ENCODE measurements at regions of chr1 and their contacts with region 1.

Region 1: GRCh38 chr1:35557292-35558063 is at the starts of genes KIAA0319L and NCDN:
- DNase-seq: peak; percentile 99
- ATAC-seq: peak; percentile 92
- H3K4me3 Mint-ChIP-seq: peak within 1 kb of the TSS; percentile 98
- H3K27ac Mint-ChIP-seq: peak within 1 kb of the TSS; percentile 97
- H3K4me1 Mint-ChIP-seq: peaks cover 45% of the 10 kb centered on the region
- H3K27me3 Mint-ChIP-seq: no peaks in the 10 kb centered on the region
- total RNA-seq, gene KIAA0319L: 26.5 to 28.1 TPM
- total RNA-seq, gene NCDN: 21.1 to 23.4 TPM

Region 2: DNA sequence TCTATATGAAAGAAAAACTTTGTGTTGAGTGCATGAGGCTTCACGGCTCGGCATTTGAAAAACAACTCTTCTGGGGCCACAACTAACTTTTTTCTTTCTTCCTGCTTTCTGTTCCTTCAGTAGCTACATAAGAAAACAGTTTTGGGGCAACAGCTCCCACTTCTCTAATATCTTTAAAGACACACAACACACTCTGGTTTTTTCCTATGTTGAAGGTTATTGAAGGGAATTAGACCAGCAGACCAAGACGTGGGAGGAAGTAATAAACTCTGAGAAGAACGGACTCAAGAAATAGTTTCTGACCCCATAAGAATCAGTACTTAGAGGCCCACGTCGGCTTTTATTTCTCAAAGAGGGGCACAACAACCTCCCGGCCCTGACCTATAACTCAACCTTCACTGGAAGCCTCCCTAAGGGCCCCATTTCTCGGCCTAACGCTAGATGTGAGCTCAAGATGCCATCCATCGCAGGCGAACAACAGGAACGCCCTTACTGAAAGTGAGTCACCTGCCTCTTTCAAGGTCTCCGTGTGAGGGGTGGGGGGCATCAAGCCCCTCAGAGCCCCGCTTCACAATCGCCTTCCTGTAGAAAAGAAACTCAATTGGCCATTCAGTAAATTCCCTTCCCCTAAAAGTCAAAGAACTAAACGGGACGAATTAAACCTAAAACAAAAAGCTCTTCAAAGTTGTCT is 526.6 kb before region 1 on chr1:
- CTCF ChIA-PET with region 1: no interaction called
- POLR2A ChIA-PET with region 1: no interaction called
- intact Hi-C with region 1: loop called in 1 of 2 experiments (anchors 1 kb)
- DNase-seq: peak; percentile 63
- ATAC-seq: peak; percentile 70
- H3K4me3 Mint-ChIP-seq: peak overlapping the region; percentile 92
- H3K27ac Mint-ChIP-seq: peak overlapping the region; percentile 92
- H3K4me1 Mint-ChIP-seq: peaks cover 33% of the 10 kb centered on the region
- H3K27me3 Mint-ChIP-seq: no peaks in the 10 kb centered on the region

Region 3: GRCh38 chr1:35268282-35269200 is 288.9 kb before region 1 on chr1 and contains the start of gene ZMYM4:
- CTCF ChIA-PET with region 1: no interaction called
- POLR2A ChIA-PET with region 1: no interaction called
- intact Hi-C with region 1: loop called in 1 of 2 experiments (anchors 1 kb)
- DNase-seq: peak; percentile 94
- ATAC-seq: peak; percentile 98
- H3K4me3 Mint-ChIP-seq: peak within 1 kb of the TSS; percentile 76
- H3K27ac Mint-ChIP-seq: peak within 1 kb of the TSS; percentile 83
- H3K4me1 Mint-ChIP-seq: peaks cover 30% of the 10 kb centered on the region
- H3K27me3 Mint-ChIP-seq: no peaks in the 10 kb centered on the region
- total RNA-seq, gene ZMYM4: 27.8 to 31.6 TPM

Region 4: DNA sequence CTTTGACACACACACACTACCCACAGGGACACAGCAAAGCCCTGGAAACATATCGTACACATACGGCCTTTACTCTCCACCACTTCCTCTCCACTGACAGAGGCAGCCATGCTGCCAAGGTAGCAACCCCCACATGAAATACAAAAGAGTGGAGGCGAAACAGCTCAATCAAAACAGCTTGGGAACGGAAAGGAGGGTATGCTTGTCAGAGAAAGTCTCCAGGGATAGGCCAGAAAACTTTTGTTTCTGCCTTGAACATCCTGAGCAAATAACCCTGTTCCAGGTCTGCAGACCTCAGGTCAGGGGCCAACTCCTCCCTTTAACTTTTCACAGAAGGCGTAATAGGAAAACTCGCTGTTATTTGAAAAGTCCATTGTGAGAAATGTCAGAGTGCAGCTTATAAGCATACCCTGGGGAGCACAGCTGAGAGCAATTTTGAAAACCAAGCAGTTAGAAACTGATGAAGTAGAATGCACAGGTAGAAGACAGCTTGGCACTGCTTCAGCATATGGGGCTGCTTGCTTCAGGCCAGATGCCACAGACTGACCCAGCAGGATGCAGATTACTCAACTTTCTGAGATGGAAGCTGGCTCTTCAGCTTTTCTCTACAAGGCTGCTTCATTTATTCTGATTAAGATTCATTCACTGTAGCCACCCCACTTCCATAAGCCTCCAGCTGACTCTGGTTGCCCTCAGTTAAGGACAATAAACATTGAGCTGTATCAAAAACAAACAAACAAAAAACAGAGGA is 18.2 kb before region 1 on chr1:
- CTCF ChIA-PET with region 1: interaction called, 8 read pairs
- POLR2A ChIA-PET with region 1: interaction called, 6 read pairs
- intact Hi-C with region 1: loop called (anchors 1 to 2 kb)
- DNase-seq: peak; percentile 48
- ATAC-seq: peak; percentile 76
- H3K4me3 Mint-ChIP-seq: peak overlapping the region; percentile 45
- H3K27ac Mint-ChIP-seq: peak overlapping the region; percentile 92
- H3K4me1 Mint-ChIP-seq: peaks cover 87% of the 10 kb centered on the region
- H3K27me3 Mint-ChIP-seq: no peaks in the 10 kb centered on the region

Region 5: DNA sequence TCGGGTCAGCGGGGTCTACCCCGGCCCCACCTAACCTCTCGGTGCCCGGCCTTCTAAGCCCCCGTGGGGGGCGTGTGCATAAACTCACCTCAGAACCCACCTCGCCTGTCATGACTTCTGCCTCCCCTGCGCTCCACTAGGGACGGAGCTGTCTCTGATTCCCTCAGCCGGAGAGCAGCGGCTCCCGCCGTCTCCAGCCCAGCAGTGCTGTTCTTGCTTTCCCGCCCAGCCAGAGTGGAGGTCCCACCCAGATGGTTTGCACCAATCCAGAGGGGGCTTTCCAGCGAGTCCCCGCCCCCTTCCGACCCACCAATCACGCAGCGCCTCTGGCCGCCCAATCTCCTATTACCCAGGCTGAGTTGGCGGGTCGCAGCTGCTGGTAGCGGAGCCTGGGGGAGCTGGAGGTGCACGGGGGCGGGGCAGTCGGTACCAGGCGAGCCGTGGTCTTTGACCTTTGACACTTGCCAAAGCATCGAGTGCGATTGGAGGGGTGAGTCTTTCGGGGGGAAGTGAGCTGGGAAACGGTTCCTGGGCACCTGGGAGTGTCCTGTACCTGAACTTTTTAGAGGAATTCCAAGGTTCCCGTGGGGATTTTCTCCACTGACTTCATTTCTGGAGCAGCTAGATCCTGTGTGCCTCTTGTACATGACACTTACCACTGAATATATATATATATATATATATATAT is 212.4 kb after region 1 on chr1 and contains the start of gene CLSPN:
- CTCF ChIA-PET with region 1: interaction called, 3 read pairs
- POLR2A ChIA-PET with region 1: interaction called, 3 read pairs
- intact Hi-C with region 1: loop called in 1 of 2 experiments (anchors 1 kb)
- DNase-seq: peak; percentile 98
- ATAC-seq: peak; percentile 98
- H3K4me3 Mint-ChIP-seq: peak within 1 kb of the TSS; percentile 91
- H3K27ac Mint-ChIP-seq: peak within 1 kb of the TSS; percentile 97
- H3K4me1 Mint-ChIP-seq: peaks cover 6% of the 10 kb centered on the region
- H3K27me3 Mint-ChIP-seq: no peaks in the 10 kb centered on the region
- total RNA-seq, gene CLSPN: 45.7 to 57.8 TPM

Region 6: GRCh38 chr1:35930593-35931445 is 373.3 kb after region 1 on chr1 and contains the start of gene AGO3:
- CTCF ChIA-PET with region 1: no interaction called
- POLR2A ChIA-PET with region 1: interaction called, 4 read pairs
- intact Hi-C with region 1: loop called in 1 of 2 experiments (anchors 2 kb)
- DNase-seq: peak; percentile 95
- ATAC-seq: peak; percentile 95
- H3K4me3 Mint-ChIP-seq: peak within 1 kb of the TSS; percentile 92
- H3K27ac Mint-ChIP-seq: peak within 1 kb of the TSS; percentile 94
- H3K4me1 Mint-ChIP-seq: peaks cover 37% of the 10 kb centered on the region
- H3K27me3 Mint-ChIP-seq: no peaks in the 10 kb centered on the region
- total RNA-seq, gene AGO3: 23.3 to 33.8 TPM